ENCODE measurements at regions of chr6 and their contacts with region 1.

Region 1: GRCh38 chr6:106097411-106098231 is 11.5 kb downstream of the PRDM1 start:
- DNase-seq: peak in 4 of 5 donors; percentile 37 to 87 (median 78)
- H3K4me3 ChIP-seq: peak overlapping the region; percentile 75
- H3K4me3 Mint-ChIP-seq: peak overlapping the region; percentile 92 to 100 (median 96)
- H3K27ac ChIP-seq: peak overlapping the region; percentile 76
- H3K27ac Mint-ChIP-seq: peak overlapping the region; percentile 81 to 98 (median 95)
- H3K4me1 ChIP-seq: peaks cover 64% of the 10 kb centered on the region
- H3K4me1 Mint-ChIP-seq: peaks cover 67 to 94% (median 91%) of the 10 kb centered on the region in 3 donors
- H3K27me3 ChIP-seq: no peaks in the 10 kb centered on the region
- H3K27me3 Mint-ChIP-seq: no peaks in the 10 kb centered on the region

Region 2: DNA sequence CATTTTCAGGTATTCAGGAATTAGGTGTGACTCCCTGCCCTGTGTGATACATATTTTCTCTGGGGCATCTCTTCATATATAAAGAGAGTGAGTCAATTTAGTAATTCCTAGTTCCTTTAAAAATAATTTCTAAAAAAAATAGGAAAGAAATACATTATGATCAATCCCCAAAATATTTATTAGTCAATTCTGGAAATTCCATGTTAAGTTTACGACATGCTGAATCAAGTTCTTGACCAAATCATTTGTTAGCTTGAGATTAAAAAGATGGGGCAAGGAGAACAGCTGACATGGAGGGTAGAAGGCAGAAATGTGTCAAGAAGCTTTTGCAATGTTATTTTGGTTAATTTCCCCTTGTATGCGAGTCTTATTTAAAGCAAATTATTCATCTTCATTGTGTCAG is 34.2 kb before region 1 on chr6:
- CTCF ChIA-PET with region 1: no interaction called
- POLR2A ChIA-PET with region 1: no interaction called
- DNase-seq: no peak
- H3K4me3 ChIP-seq: no peak overlapping the region
- H3K4me3 Mint-ChIP-seq: no peak overlapping the region
- H3K27ac ChIP-seq: no peak overlapping the region
- H3K27ac Mint-ChIP-seq: no peak overlapping the region
- H3K4me1 ChIP-seq: no peaks in the 10 kb centered on the region
- H3K4me1 Mint-ChIP-seq: no peaks in the 10 kb centered on the region
- H3K27me3 ChIP-seq: no peaks in the 10 kb centered on the region
- H3K27me3 Mint-ChIP-seq: no peaks in the 10 kb centered on the region

Region 3: GRCh38 chr6:106085984-106086813 is 11.4 kb before region 1 on chr6 and contains the start of gene PRDM1:
- CTCF ChIA-PET with region 1: interaction called, 34 read pairs
- POLR2A ChIA-PET with region 1: interaction called, 10 read pairs
- DNase-seq: peak; percentile 52 to 88 (median 81)
- H3K4me3 ChIP-seq: peak within 1 kb of the TSS; percentile 61
- H3K4me3 Mint-ChIP-seq: peak within 1 kb of the TSS; percentile 90 to 97 (median 93)
- H3K27ac ChIP-seq: peak within 1 kb of the TSS; percentile 52
- H3K27ac Mint-ChIP-seq: peak within 1 kb of the TSS; percentile 61 to 97 (median 92)
- H3K4me1 ChIP-seq: peaks cover 66% of the 10 kb centered on the region
- H3K4me1 Mint-ChIP-seq: peaks cover 80 to 94% (median 93%) of the 10 kb centered on the region in 3 donors
- H3K27me3 ChIP-seq: no peaks in the 10 kb centered on the region
- H3K27me3 Mint-ChIP-seq: peaks cover 0 to 4% of the 10 kb centered on the region in 2 donors
- total RNA-seq, gene PRDM1: 88.2 to 90.7 TPM

Region 4: GRCh38 chr6:106110164-106110826 is 12.7 kb after region 1 on chr6:
- CTCF ChIA-PET with region 1: interaction called, 5 read pairs
- POLR2A ChIA-PET with region 1: interaction called, 16 read pairs
- DNase-seq: no peak
- H3K4me3 ChIP-seq: no peak overlapping the region
- H3K4me3 Mint-ChIP-seq: peak overlapping the region in 2 of 7 donors; percentile 10 to 43
- H3K27ac ChIP-seq: no peak overlapping the region
- H3K27ac Mint-ChIP-seq: peak overlapping the region; percentile 14 to 87 (median 72)
- H3K4me1 ChIP-seq: peaks cover 53% of the 10 kb centered on the region
- H3K4me1 Mint-ChIP-seq: peaks cover 83 to 98% (median 97%) of the 10 kb centered on the region in 3 donors
- H3K27me3 ChIP-seq: no peaks in the 10 kb centered on the region
- H3K27me3 Mint-ChIP-seq: peaks cover 0 to 4% of the 10 kb centered on the region in 2 donors

Region 5: GRCh38 chr6:106194949-106195921 is 97.6 kb after region 1 on chr6:
- CTCF ChIA-PET with region 1: interaction called, 5 read pairs
- POLR2A ChIA-PET with region 1: interaction called, 12 read pairs
- DNase-seq: peak in 3 of 5 donors; percentile 6 to 56 (median 34)
- H3K4me3 ChIP-seq: peak overlapping the region; percentile 27
- H3K4me3 Mint-ChIP-seq: peak overlapping the region; percentile 70 to 87 (median 72)
- H3K27ac ChIP-seq: peak overlapping the region; percentile 4
- H3K27ac Mint-ChIP-seq: peak overlapping the region; percentile 71 to 96 (median 89)
- H3K4me1 ChIP-seq: peaks cover 46% of the 10 kb centered on the region
- H3K4me1 Mint-ChIP-seq: peaks cover 38 to 57% (median 44%) of the 10 kb centered on the region in 3 donors
- H3K27me3 ChIP-seq: no peaks in the 10 kb centered on the region
- H3K27me3 Mint-ChIP-seq: no peaks in the 10 kb centered on the region

Measured in CD8-positive, alpha-beta memory T cell (primary cell).